ENCODE measurements at regions of chrX and their contacts with region 1.

Region 1: DNA sequence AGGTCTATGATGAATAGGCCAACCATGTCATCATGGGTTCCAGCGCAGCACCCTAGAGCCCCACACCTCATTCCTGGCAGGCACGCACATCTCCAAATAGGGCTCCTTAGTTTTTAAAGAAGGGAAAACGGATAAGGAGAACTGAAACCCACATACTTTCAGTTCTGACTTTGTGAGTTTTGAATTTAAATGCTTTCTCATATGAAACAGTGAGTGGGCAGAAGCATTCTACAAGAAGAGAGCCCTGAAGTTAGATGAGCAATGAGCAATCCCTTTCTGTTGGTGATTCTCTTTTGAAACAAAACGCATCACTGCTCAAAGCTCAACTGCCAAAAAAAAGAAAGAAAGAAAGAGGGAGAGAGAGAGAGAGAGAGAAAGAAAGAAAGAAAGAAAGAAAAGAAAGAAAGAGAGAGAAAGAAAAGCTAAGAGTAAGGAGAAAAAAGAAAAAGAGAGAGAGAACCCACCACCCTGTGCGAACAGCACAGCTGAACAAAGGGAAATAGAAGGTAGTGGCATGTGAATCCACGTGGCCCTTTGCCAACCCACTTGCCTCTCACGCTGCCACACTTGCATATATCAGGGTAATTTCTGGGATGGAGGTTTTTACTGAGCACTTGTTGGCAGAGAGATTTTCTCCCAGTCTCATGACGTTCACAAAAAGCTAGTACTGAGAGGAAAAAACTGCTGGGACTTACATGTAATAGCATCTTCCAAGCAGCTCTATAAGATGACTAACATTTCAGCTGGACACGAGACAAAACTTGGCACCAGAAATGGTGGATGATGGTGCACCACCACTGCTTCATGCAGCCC is 31.0 kb downstream of the TMSB4X start:
- DNase-seq: peak in 1 of 2 donors; percentile 66
- ATAC-seq: no peak
- H3K4me3 ChIP-seq: no peak overlapping the region
- H3K27ac ChIP-seq: peak overlapping the region; percentile 43 to 76
- H3K4me1 ChIP-seq: peaks cover 0 to 3% of the 10 kb centered on the region in 2 donors
- H3K27me3 ChIP-seq: no peaks in the 10 kb centered on the region

Region 2: DNA sequence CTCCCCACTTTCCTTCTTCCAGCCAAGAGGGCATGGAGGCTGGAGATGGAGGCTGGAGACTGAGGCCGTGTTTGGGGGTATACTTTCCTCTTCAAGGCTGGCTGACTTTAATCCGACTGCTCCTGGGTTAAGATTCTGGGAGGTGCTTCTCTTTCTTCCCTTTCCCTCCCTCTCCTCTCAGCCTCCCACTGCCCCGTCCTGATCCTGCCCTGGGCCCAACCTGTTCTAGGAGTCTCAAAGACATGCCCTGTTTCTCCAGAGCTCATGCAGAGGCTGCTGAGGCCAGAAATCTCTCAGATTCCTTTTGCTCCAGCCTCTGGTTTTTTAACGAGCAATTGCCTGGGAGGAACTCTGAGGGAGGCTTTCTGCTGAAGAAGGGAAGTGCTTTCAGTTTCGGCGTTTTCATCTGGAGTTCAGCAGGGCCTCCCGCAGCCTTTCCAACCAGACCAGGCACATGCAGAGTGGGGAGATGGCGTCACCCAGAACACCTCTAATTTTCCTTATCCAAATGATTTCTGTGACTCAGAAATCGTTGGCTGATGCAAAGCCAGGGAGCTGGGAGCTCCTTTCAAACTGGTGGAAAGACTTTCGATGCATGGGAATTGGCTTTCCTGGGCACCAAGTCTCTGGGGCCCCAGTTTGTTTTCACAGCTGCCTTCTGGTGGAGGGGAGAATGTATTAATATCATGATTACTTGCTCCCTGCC is 73.0 kb after region 1 on chrX:
- intact Hi-C with region 1: loop called in 1 of 2 experiments (anchors 5 kb)
- DNase-seq: peak in 1 of 2 donors; percentile 56
- ATAC-seq: peak; percentile 78
- H3K4me3 ChIP-seq: no peak overlapping the region
- H3K27ac ChIP-seq: peak overlapping the region in 1 of 2 donors; percentile 86
- H3K4me1 ChIP-seq: peaks cover 0 to 3% of the 10 kb centered on the region in 2 donors
- H3K27me3 ChIP-seq: no peaks in the 10 kb centered on the region

Measured in aorta (tissue), 5 donors.